ENCODE measurements at regions of chr1 and their contacts with region 1.

Region 1: DNA sequence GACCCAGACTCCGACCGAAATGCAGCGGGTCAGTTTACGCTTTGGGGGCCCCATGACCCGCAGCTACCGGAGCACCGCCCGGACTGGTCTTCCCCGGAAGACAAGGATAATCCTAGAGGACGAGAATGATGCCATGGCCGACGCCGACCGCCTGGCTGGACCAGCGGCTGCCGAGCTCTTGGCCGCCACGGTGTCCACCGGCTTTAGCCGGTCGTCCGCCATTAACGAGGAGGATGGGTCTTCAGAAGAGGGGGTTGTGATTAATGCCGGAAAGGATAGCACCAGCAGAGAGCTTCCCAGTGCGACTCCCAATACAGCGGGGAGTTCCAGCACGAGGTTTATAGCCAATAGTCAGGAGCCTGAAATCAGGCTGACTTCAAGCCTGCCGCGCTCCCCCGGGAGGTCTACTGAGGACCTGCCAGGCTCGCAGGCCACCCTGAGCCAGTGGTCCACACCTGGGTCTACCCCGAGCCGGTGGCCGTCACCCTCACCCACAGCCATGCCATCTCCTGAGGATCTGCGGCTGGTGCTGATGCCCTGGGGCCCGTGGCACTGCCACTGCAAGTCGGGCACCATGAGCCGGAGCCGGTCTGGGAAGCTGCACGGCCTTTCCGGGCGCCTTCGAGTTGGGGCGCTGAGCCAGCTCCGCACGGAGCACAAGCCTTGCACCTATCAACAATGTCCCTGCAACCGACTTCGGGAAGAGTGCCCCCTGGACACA is 534 bp downstream of the C1orf56 start:
- DNase-seq: peak in 2 of 4 experiments; percentile 45 to 67
- ATAC-seq: peak; percentile 74
- H3K4me3 ChIP-seq: peak overlapping the region; percentile 39
- H3K27ac ChIP-seq: peak overlapping the region; percentile 52
- H3K4me1 ChIP-seq: peaks cover 18 to 22% of the 10 kb centered on the region in 2 experiments; a peak in 4 of 5 replicates
- H3K27me3 ChIP-seq: no peaks in the 10 kb centered on the region
- CTCF ChIP-seq: peak in 2 of 3 experiments; percentile 46 to 48; a peak in 5 of 6 replicates
- EP300 ChIP-seq: no peak
- POLR2A ChIP-seq: peak; percentile 17; the same call in 1 of the 2 replicates
- RAD21 ChIP-seq: no peak

Region 2: GRCh38 chr1:149997585-149998262 is 1050.4 kb before region 1 on chr1:
- CTCF ChIA-PET with region 1: no interaction called
- POLR2A ChIA-PET with region 1: no interaction called
- in situ Hi-C with region 1: no loop called
- intact Hi-C with region 1: no loop called
- DNase-seq: no peak
- ATAC-seq: no peak
- H3K4me3 ChIP-seq: no peak overlapping the region
- H3K27ac ChIP-seq: no peak overlapping the region
- H3K4me1 ChIP-seq: peaks cover under 1 to 12% of the 10 kb centered on the region in 2 experiments; a peak in 4 of 5 replicates
- H3K27me3 ChIP-seq: no peaks in the 10 kb centered on the region
- CTCF ChIP-seq: no peak
- EP300 ChIP-seq: no peak
- POLR2A ChIP-seq: no peak
- RAD21 ChIP-seq: no peak

Region 3: DNA sequence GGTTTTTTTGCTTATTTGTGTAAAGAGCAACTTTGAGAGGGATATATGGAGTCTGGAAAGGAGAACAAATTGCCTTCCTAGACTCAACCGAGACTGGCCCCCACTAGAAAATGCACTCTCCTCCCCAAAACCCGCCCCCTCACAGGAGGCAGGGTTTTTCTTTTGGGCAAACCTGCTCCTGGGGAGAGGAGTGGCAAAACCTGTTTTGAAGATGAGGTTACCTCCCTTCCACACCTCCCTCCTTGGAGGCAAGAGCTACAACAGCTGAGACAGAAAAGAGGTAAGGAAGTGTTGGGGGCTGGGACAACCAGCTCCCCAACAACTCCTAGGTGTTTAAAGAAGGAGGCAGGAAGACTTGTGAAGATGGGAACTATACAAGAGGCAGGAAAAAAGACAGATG is 11.7 kb before region 1 on chr1 and contains the start of gene BNIPL:
- CTCF ChIA-PET with region 1: no interaction called
- POLR2A ChIA-PET with region 1: interaction called, 36 read pairs
- in situ Hi-C with region 1: no loop called
- intact Hi-C with region 1: no loop called
- DNase-seq: no peak
- ATAC-seq: peak; percentile 16; the same call in 2 of the 3 replicates
- H3K4me3 ChIP-seq: no peak within 1 kb of the TSS
- H3K27ac ChIP-seq: no peak within 1 kb of the TSS
- H3K4me1 ChIP-seq: peaks cover 4 to 9% of the 10 kb centered on the region in 2 experiments; a peak in 2 of 5 replicates
- H3K27me3 ChIP-seq: no peaks in the 10 kb centered on the region
- CTCF ChIP-seq: no peak
- EP300 ChIP-seq: no peak
- POLR2A ChIP-seq: peak; percentile 15; the same call in 1 of the 2 replicates
- RAD21 ChIP-seq: no peak
- polyA plus RNA-seq, gene BNIPL: 0.08 to 0.31 TPM

Region 4: DNA sequence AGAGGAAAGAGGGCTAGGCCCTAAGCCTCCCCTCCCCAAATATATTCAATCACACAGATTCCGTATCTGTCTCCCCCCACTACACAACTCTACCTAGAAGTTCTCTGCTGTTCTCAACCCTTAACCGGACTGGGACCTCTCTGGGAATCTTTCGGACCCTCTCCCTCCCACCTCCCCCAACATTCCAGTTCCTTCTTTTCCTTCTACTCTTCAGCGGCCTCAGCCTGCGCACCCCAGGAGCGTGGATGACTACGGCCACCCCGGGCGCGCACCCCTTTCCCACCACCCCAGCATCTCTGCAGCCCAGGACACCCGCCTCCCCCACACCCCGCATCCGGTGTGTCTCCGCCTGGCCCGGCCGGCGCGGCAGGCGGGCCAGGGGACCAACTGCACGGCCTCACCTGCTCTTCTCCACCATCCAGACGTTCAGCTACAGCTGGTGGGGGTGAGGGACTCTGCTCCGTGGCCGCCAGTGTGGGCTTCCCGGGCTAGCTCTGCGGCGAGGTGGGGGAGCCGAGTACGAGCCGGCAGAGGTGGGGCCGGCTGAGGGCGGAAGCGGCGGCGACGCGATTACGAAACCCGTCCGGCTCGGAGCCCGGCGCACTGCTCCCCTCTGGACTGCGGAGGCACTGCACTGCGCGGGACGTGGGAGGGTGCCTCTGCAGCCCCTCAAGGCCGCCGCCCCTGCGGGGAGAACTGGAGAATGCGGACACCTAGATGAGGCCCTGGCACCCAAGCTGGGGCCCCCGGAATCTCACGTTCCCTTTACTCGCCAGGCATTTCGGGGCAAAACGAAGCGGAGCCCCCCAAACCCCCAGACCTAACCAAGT is 11.2 kb after region 1 on chr1 and contains the start of gene CDC42SE1:
- CTCF ChIA-PET with region 1: no interaction called
- POLR2A ChIA-PET with region 1: interaction called, 19 read pairs
- in situ Hi-C with region 1: no loop called
- intact Hi-C with region 1: no loop called
- DNase-seq: peak; percentile 84 to 94 (median 88)
- ATAC-seq: peak; percentile 80
- H3K4me3 ChIP-seq: peak within 1 kb of the TSS; percentile 95
- H3K27ac ChIP-seq: peak within 1 kb of the TSS; percentile 91
- H3K4me1 ChIP-seq: peaks cover 38 to 44% of the 10 kb centered on the region in 2 experiments
- H3K27me3 ChIP-seq: no peaks in the 10 kb centered on the region
- CTCF ChIP-seq: peak; percentile 84 to 96 (median 84)
- EP300 ChIP-seq: peak; percentile 37; the same call in 1 of the 2 replicates
- POLR2A ChIP-seq: peak; percentile 91
- RAD21 ChIP-seq: peak; percentile 45 to 59
- polyA plus RNA-seq, gene CDC42SE1: 78.1 to 114 TPM